ENCODE measurements at regions of chr14 and their contacts with region 1.

Region 1: GRCh38 chr14:63852817-63853731 is at the start of gene SYNE2:
- DNase-seq: peak; percentile 76
- H3K4me3 Mint-ChIP-seq: peak within 1 kb of the TSS; percentile 93
- H3K27ac Mint-ChIP-seq: peak within 1 kb of the TSS; percentile 89
- H3K4me1 Mint-ChIP-seq: peaks cover 38% of the 10 kb centered on the region
- H3K27me3 Mint-ChIP-seq: peaks cover 46% of the 10 kb centered on the region
- total RNA-seq, gene SYNE2: 15.2 and 16.1 TPM in 2 replicates

Region 2: DNA sequence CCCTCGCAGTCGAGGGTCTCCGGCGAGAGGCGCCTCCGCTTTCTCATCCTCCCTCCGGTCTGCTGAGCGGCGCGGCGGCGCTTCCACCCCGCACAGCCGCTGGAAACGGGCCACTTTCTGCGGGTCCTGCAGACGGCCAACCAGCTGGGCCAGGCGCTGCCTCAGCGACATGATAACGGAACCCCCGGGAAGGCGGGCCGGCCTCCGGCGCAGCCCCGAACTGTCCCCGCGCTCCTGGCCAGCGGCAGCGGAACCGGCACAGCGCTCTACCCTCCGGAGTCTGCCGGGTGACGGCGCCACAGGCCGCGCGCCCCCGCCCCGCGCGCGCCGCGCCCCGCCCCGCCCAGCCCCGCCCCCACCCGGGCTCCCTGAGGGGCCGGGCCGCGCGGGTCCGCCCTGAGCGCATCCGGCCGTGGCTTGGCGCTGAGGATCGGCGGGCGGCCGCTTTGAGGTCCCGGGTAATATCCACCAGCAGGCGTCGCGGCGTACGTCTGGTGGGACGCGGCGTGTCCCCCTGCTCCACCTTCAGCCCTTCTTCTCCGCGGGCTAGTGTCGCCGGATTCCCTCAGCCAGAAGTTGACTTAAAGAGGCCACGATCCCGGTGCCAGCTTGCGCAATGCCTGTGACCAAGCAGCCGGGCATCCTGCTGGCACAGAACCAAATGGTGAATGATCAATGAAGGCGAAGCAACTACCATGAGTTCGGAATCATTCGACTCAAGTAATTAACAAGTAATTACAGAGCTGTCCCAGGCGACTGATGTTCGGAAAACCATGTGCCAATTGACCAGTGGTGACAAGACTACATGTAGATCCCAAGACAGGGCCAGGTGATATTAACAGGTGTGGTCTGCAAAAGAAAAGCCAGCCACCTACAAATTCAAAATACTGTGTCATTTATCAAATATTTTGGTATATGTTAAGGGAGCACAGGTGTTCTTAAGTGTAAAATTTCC is 125.0 kb before region 1 on chr14 and contains the start of gene SGPP1:
- intact Hi-C with region 1: loop called (anchors 5 kb)
- DNase-seq: peak; percentile 80
- H3K4me3 Mint-ChIP-seq: peak within 1 kb of the TSS; percentile 100
- H3K27ac Mint-ChIP-seq: peak within 1 kb of the TSS; percentile 94
- H3K4me1 Mint-ChIP-seq: peaks cover 29% of the 10 kb centered on the region
- H3K27me3 Mint-ChIP-seq: peaks cover 22% of the 10 kb centered on the region
- total RNA-seq, gene SGPP1: 13.0 and 14.0 TPM in 2 replicates

Region 3: DNA sequence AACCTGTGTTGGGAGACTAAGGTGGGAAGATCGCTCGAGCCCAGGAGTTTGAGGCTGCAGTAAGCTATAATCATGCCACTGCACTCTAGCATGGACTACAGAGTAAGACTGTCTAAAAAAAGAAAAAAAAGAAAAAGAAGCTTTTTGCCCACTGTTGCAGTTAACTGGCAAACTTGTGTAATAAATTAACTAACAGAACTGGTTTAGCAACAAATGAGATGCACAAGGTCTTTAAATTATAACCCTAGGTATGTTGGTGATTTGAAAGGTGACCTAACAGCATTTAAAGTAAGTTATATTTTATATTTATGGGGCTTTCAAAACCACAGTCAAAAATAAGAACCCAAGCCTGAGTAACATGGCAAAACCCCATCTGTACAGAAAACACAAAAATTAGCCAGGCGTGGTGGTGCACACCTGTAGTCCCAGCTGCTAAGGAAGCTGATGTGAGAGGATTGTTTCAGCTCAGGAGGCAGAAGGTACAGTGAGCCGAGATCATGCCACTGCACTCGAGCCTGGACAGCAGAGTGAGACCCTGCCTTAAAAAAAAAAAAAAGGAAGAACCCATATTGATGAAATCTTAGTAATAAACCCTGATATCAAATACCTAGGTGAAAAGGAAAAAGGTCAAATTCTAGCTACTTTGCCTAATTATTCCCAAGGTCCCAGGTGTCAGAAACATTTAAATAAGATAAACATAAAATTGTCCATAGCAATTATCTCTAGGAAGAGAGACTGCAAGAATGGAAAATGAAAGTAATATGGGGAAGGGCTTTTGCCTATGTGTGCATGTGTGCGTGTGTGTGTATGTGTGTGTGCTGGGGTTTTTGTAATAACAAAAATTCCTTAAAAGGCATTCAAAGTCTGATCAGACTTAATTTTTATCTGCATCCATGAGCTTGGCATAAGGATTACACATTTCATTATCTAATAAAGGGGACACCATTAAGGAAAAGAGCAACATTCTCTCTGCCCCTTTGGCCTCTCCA is 15.2 kb after region 1 on chr14:
- intact Hi-C with region 1: loop called (anchors 1 kb)
- DNase-seq: no peak
- H3K4me3 Mint-ChIP-seq: peak overlapping the region; percentile 15
- H3K27ac Mint-ChIP-seq: no peak overlapping the region
- H3K4me1 Mint-ChIP-seq: peaks cover 44% of the 10 kb centered on the region
- H3K27me3 Mint-ChIP-seq: peaks cover 8% of the 10 kb centered on the region

Region 4: DNA sequence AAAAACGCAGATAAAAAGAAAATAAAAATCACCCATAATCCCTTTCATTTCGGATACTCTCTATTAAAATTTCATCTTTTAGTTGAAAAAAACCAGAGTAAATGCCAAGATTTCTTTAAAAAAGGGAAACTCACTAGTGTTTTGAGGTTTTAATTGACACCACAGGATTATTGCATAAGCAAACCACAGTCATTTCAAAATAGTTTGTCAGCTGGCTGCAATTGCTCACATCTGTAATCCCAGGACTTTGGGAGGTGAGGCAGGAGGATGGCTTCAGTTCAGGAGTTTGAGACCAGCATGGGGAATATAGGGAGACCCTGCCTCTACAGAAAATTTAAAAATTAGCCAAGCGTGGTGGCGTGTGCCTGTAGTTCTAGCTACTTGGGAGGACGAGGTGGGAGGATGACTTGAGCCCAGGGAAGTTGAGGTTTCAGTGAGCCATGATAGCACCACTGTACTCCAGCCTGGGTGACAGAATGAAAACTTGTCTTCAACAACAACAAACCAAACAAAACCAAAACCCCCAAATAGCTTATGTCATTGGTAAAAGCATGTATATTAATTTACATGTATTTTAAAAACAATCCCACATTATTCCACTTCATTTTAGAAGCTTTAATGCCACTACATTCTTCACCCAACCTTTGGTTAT is 48.5 kb after region 1 on chr14:
- intact Hi-C with region 1: loop called (anchors 10 kb)
- DNase-seq: no peak
- H3K4me3 Mint-ChIP-seq: no peak overlapping the region
- H3K27ac Mint-ChIP-seq: no peak overlapping the region
- H3K4me1 Mint-ChIP-seq: peaks cover 16% of the 10 kb centered on the region
- H3K27me3 Mint-ChIP-seq: peaks cover 17% of the 10 kb centered on the region

Region 5: DNA sequence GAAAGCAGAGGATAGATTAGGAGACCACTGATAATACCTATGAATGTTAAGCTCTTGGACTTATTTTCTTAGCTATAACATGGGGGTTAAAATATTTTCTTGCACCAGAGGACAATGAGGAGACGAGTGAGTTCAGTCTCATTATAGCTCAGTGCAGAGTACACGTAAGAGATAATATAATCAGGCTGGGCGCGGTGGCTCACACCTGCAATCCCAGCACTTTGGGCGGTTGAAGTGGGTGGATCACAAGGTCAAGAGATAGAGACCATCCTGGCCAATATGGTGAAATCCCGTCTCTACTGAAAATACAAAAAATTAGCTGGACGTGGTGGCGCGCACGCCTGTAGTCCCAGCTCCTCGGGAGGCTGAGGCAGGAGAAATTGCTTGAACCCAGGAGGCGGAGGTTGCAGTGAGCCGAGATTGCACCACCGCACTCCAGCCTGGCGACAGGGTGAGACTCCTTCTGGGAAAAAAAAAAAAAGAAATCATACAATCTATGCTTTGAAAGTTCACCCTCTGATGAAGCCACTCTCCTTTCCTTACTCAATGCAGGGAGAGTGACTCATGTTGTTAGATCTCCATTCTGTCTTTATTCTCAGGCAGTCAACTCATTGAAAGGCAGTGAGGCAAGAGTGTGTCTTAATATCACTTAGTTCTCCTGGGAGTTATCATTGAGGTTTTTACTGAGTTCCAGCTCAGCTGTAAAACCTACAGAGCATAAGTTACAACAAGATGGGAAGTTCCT is 133.9 kb after region 1 on chr14:
- intact Hi-C with region 1: loop called (anchors 10 kb)
- DNase-seq: no peak
- H3K4me3 Mint-ChIP-seq: no peak overlapping the region
- H3K27ac Mint-ChIP-seq: no peak overlapping the region
- H3K4me1 Mint-ChIP-seq: peaks cover 12% of the 10 kb centered on the region
- H3K27me3 Mint-ChIP-seq: no peaks in the 10 kb centered on the region